Naive thymus-derived CD4-positive, alpha-beta T cell (primary cell): ENCODE measurements at regions of chr2 and their contacts with region 1.

Region 1: DNA sequence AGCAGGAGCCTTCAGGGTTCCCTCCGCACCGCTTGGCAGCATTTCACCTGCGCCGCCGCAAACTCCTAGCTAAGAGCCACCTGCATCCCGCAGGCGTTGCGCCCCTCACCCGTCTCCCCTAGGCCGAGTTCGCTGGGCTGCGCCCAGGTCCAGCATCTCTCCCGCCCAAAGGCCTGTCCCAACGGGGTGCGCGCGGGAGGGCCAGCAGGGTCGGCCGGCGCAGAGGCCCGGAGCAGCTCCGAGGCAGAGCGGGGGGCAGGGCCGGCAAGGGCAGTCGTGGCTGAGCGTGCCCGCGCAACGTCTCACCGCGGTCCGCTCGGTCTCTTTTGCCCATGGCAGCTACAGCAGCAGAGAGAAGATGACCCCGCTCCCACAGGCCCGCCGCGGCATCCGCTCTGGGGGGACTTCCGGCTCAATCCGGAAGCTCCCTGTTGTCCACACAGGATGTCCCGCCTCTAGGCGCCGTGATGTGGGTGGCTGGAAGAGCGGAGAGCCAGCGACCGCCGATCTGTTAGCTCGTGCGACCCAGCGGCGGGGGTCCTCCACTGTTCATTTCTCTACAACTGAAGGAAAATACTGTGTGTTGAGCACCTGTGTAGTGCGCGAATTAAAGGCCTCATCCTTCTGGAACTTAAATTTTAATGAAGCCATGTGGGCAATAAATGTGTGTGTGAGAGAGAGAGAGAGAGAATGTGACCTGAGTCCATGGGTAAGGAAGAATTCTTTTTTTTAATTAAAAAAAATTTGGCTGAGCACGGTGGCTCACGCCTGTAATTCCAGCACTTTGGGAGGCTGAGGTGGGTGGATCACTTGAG is at the start of gene ERCC3:
- DNase-seq: peak; percentile 54 to 81 (median 72)
- ATAC-seq: peak; percentile 93
- H3K4me3 ChIP-seq: peak within 1 kb of the TSS; percentile 87
- H3K4me3 Mint-ChIP-seq: peak within 1 kb of the TSS; percentile 92 to 99 (median 98)
- H3K27ac ChIP-seq: peak within 1 kb of the TSS; percentile 86
- H3K27ac Mint-ChIP-seq: peak within 1 kb of the TSS; percentile 77 to 97 (median 95)
- H3K4me1 ChIP-seq: peaks cover 8 to 12% of the 10 kb centered on the region in 2 donors
- H3K4me1 Mint-ChIP-seq: peaks cover 18 to 49% (median 37%) of the 10 kb centered on the region in 7 donors
- H3K27me3 ChIP-seq: no peaks in the 10 kb centered on the region
- H3K27me3 Mint-ChIP-seq: no peaks in the 10 kb centered on the region
- total RNA-seq, gene ERCC3: 43.4 to 71.5 (median 56.8) TPM

Region 2: DNA sequence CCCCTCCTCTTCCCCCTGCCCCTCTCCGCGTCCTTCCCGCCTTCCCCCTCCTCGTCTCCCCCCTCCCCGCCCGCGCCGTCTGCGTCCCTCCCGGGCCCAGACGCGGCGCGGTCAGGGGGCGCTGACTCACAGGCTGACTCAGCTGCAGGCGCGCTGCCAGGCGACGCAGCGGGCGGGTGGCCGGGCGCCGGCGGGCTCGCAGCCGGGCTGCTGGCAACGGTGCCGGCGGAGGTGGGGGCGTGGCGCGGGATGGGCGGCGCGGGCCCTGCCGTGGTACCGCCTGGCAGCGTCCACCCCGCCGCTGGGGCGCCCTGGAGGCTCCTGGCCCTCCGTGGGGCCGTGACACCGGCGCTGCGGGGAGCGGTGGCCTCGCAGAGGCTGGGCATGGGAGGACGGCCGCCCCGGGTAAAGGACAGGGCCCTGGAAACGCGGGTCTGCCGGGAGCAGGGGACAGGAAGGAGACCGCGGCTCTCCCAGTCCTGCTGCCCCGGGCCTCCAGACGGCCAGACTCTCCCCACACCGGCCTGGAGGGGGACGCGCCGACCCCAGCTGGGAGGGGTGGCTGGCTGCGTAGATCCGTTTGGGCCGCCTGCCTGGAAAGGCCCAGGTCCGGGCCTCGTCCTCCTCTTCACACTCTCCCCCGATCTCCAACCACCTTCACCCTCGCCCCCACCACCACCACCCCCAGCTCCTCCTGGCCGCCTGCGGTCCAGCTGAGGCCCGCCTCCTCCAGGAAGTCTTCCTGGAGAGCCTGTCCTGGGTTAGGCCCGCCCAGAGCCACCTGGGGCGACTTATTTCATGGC is 114.2 kb after region 1 on chr2:
- CTCF ChIA-PET with region 1: no interaction called
- POLR2A ChIA-PET with region 1: no interaction called
- intact Hi-C with region 1: loop called in 1 of 2 experiments (anchors 2 kb)
- DNase-seq: peak; percentile 46 to 92 (median 64)
- ATAC-seq: peak; percentile 92
- H3K4me3 ChIP-seq: peak overlapping the region; percentile 36
- H3K4me3 Mint-ChIP-seq: peak overlapping the region; percentile 61 to 87 (median 74)
- H3K27ac ChIP-seq: no peak overlapping the region
- H3K27ac Mint-ChIP-seq: peak overlapping the region in 3 of 9 donors; percentile 48 to 83 (median 58)
- H3K4me1 ChIP-seq: no peaks in the 10 kb centered on the region
- H3K4me1 Mint-ChIP-seq: peaks cover 4 to 26% (median 12%) of the 10 kb centered on the region in 7 donors
- H3K27me3 ChIP-seq: no peaks in the 10 kb centered on the region
- H3K27me3 Mint-ChIP-seq: peaks cover 0 to 10% (median 0%) of the 10 kb centered on the region in 5 donors